ENCODE measurements at regions of chr15 and their contacts with region 1.

Region 1: GRCh38 chr15:71559098-71559497 is 251.3 kb upstream of the NR2E3 start:
- DNase-seq: peak; percentile 89
- H3K4me3 ChIP-seq: peak overlapping the region in 2 of 3 experiments; percentile 29 to 30
- H3K27ac ChIP-seq: peak overlapping the region; percentile 86
- H3K4me1 ChIP-seq: peaks cover 56% of the 10 kb centered on the region
- H3K27me3 ChIP-seq: no peaks in the 10 kb centered on the region
- CTCF ChIP-seq: no peak

Region 2: DNA sequence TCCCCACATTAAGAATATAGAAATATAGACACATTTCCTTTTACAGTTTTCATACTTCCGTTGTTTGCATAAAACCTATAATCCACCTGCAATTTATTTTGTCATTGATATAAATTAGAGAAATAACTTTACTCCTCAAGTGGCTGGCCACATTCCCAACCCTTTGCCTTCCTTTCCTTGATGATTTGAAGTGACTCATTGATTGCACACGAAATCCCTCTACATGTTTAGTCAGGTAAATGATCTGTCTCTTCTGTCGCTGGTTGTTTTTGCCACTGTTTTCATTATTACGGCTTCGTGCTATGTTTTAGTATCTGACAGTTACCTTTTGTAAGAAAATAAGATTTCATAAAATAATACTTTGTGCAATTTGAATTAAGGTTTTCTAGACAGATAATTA is 20.9 kb before region 1 on chr15:
- CTCF ChIA-PET with region 1: no interaction called
- dilution Hi-C with region 1: no loop called
- in situ Hi-C with region 1: no loop called
- intact Hi-C with region 1: loop called (anchors 2 kb)
- DNase-seq: peak; percentile 79
- H3K4me3 ChIP-seq: no peak overlapping the region
- H3K27ac ChIP-seq: peak overlapping the region; percentile 19
- H3K4me1 ChIP-seq: peaks cover 14% of the 10 kb centered on the region
- H3K27me3 ChIP-seq: no peaks in the 10 kb centered on the region
- CTCF ChIP-seq: no peak

Region 3: GRCh38 chr15:71806452-71806931 is 247.4 kb after region 1 on chr15:
- CTCF ChIA-PET with region 1: no interaction called
- dilution Hi-C with region 1: no loop called
- in situ Hi-C with region 1: no loop called
- intact Hi-C with region 1: no loop called
- DNase-seq: peak; percentile 25
- H3K4me3 ChIP-seq: no peak overlapping the region
- H3K27ac ChIP-seq: no peak overlapping the region
- H3K4me1 ChIP-seq: peaks cover 17% of the 10 kb centered on the region
- H3K27me3 ChIP-seq: no peaks in the 10 kb centered on the region
- CTCF ChIP-seq: no peak

Measured in mammary epithelial cell (primary cell).